Ovary (tissue), 10 donors: ENCODE measurements at regions of chr2 and their contacts with region 1.

Region 1: DNA sequence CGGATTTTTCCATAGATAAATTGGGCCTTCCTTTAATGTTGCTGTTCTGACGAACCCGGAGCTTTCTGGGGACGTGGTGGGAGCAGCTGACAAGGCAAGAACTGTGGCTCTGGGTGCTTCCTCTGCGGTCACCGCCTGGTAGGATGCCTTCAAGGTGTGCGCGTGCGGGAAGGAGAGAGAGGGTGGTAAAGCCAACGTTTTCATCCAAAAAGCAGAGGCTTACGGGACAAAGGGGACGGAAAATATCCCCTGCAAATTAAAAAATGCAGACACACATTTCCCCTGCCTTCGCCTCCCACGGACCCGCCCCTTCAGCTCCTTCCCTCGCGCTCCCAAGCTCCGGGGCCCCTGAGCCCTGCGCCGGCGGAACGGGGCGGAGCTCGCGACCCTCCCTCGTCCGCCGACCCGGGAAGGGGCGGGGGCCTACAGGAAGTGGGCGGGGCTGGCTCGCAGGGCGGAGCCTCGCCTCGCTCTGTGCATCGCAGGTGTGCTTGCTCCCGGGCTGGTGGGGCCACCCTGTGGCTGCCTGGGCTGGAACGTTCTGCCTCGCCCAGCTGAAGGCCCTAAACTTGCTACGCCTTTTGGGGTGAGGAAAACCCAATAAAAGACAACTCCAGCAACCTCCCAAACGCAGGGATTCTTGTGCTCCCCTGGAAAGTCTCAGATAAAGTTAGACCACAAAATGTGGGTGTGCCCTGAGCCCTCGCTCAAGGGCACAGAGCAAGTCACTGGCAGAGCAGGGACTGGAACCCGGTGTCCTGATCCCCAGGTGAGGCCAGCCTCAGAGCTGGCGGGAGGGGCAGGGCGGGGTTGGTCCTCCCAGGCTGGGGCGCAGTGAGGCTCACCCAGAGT is 25.4 kb upstream of the SLC66A3 start:
- DNase-seq: peak; percentile 65 to 83 (median 78)
- H3K4me3 ChIP-seq: peak overlapping the region; percentile 27
- H3K27ac ChIP-seq: peak overlapping the region in 1 of 2 donors; percentile 37
- H3K4me1 ChIP-seq: peaks cover 6% of the 10 kb centered on the region
- H3K27me3 ChIP-seq: no peaks in the 10 kb centered on the region
- CTCF ChIP-seq: no peak
- EP300 ChIP-seq: no peak
- POLR2A ChIP-seq: no peak

Region 2: DNA sequence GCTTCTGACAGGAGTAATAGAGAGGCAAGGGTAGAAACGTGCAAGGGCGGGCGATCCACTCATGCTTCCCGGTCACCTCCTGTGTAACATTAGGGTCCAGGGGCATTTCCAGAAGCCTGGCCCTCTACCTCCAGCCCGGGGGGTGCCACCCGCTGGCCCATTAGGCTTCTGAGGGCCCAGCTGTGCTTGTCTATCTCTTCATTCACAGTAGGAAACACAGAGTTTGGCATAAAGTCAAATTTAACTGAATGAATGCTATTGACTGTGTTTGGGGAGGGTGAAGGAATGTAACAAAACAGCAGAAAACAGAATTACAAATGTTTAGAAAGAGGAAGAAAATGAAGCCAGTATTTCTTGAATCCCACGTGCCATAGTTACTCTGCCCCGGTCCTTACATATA is 87.0 kb before region 1 on chr2:
- intact Hi-C with region 1: no loop called
- DNase-seq: no peak
- H3K4me3 ChIP-seq: no peak overlapping the region
- H3K27ac ChIP-seq: no peak overlapping the region
- H3K4me1 ChIP-seq: no peaks in the 10 kb centered on the region
- H3K27me3 ChIP-seq: no peaks in the 10 kb centered on the region
- CTCF ChIP-seq: no peak
- EP300 ChIP-seq: no peak
- POLR2A ChIP-seq: no peak

Region 3: GRCh38 chr2:11213090-11213638 is 83.3 kb after region 1 on chr2:
- intact Hi-C with region 1: loop called in 1 of 4 experiments (anchors 10 kb)
- DNase-seq: no peak
- H3K4me3 ChIP-seq: no peak overlapping the region
- H3K27ac ChIP-seq: no peak overlapping the region
- H3K4me1 ChIP-seq: no peaks in the 10 kb centered on the region
- H3K27me3 ChIP-seq: no peaks in the 10 kb centered on the region
- CTCF ChIP-seq: no peak
- EP300 ChIP-seq: no peak
- POLR2A ChIP-seq: no peak

Region 4: GRCh38 chr2:11224887-11225286 is 95.1 kb after region 1 on chr2:
- intact Hi-C with region 1: loop called in 1 of 4 experiments (anchors 10 kb)
- DNase-seq: no peak
- H3K4me3 ChIP-seq: no peak overlapping the region
- H3K27ac ChIP-seq: no peak overlapping the region
- H3K4me1 ChIP-seq: no peaks in the 10 kb centered on the region
- H3K27me3 ChIP-seq: no peaks in the 10 kb centered on the region
- CTCF ChIP-seq: no peak
- EP300 ChIP-seq: no peak
- POLR2A ChIP-seq: no peak

Region 5: GRCh38 chr2:11430729-11431128 is 300.9 kb after region 1 on chr2:
- intact Hi-C with region 1: no loop called
- DNase-seq: no peak
- H3K4me3 ChIP-seq: no peak overlapping the region
- H3K27ac ChIP-seq: no peak overlapping the region
- H3K4me1 ChIP-seq: no peaks in the 10 kb centered on the region
- H3K27me3 ChIP-seq: no peaks in the 10 kb centered on the region
- CTCF ChIP-seq: no peak
- EP300 ChIP-seq: no peak
- POLR2A ChIP-seq: no peak

Region 6: DNA sequence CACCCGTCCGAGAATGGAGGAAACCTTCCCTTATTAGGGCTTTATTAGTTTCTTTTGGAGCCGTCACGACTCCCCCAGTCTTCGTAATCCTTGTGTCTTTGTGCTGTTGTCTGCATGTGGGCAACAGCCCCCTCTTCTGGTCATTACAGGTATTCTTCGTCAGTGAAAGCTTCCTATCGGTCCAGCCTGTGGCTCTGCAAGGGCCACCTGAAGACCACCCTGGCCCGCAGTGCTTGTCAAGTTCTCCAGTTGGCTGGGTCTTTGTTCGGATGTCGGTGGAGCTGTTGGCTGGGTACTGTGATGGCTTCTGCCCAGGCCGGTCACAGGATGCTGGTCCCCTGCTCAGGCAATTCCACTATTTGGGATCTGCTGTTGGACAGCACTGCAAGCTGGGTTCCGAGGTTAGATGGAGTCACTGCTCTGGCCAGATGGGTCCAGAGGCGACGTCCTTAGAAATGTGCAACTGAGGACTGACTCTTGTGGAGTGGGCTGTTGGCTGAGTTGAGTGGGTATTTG is 317.0 kb after region 1 on chr2:
- intact Hi-C with region 1: loop called in 3 of 4 experiments (anchors 2 to 10 kb)
- DNase-seq: peak; percentile 50 to 74 (median 52)
- H3K4me3 ChIP-seq: no peak overlapping the region
- H3K27ac ChIP-seq: no peak overlapping the region
- H3K4me1 ChIP-seq: no peaks in the 10 kb centered on the region
- H3K27me3 ChIP-seq: no peaks in the 10 kb centered on the region
- CTCF ChIP-seq: peak; percentile 68 to 82 (median 79)
- EP300 ChIP-seq: no peak
- POLR2A ChIP-seq: no peak

Region 7: GRCh38 chr2:11701751-11702301 is 572.0 kb after region 1 on chr2:
- intact Hi-C with region 1: no loop called
- DNase-seq: no peak
- H3K4me3 ChIP-seq: no peak overlapping the region
- H3K27ac ChIP-seq: no peak overlapping the region
- H3K4me1 ChIP-seq: peaks cover 15% of the 10 kb centered on the region
- H3K27me3 ChIP-seq: no peaks in the 10 kb centered on the region
- CTCF ChIP-seq: no peak
- EP300 ChIP-seq: no peak
- POLR2A ChIP-seq: no peak